Ascending aorta (tissue), 2 donors: ENCODE measurements at regions of chr3 and their contacts with region 1.

Region 1: GRCh38 chr3:72646263-72646662 is 202.0 kb downstream of the SHQ1 start:
- DNase-seq: no peak
- H3K4me3 ChIP-seq: no peak overlapping the region
- H3K27ac ChIP-seq: no peak overlapping the region
- H3K4me1 ChIP-seq: no peaks in the 10 kb centered on the region
- H3K27me3 ChIP-seq: no peaks in the 10 kb centered on the region
- CTCF ChIP-seq: no peak

Region 2: GRCh38 chr3:72227486-72228070 is 418.7 kb before region 1 on chr3:
- intact Hi-C with region 1: loop called (anchors 5 kb)
- DNase-seq: no peak
- H3K4me3 ChIP-seq: no peak overlapping the region
- H3K27ac ChIP-seq: no peak overlapping the region
- H3K4me1 ChIP-seq: peaks cover 0 to 3% of the 10 kb centered on the region in 2 donors
- H3K27me3 ChIP-seq: no peaks in the 10 kb centered on the region
- CTCF ChIP-seq: no peak